B cell (primary cell): ENCODE measurements at regions of chr5 and their contacts with region 1.

Region 1: DNA sequence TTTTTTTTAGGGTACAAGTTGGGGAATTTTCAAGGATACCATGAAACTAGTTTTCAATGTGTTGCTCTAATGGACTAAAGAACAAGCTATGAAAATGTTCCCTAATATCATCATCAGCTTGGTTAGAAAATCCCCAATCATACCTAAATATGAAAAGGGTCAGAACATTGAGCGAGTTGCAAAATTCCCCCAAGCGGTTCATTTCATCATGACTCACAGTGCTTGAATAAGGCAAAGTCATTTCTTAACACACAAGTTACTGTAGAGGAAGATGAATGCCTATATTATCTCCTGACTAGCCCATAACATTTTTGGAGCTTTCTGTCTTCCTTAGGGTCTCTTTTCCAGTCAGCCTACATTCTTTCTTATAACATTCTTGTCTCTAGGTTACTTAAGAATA is 62.7 kb downstream of the ST8SIA4 start:
- DNase-seq: peak; percentile 54
- ATAC-seq: peak; percentile 61
- H3K4me3 ChIP-seq: no peak overlapping the region
- H3K4me3 Mint-ChIP-seq: peak overlapping the region; percentile 74
- H3K27ac ChIP-seq: peak overlapping the region in 1 of 2 donors; percentile 62
- H3K27ac Mint-ChIP-seq: no peak overlapping the region
- H3K4me1 ChIP-seq: peaks cover 14 to 23% of the 10 kb centered on the region in 2 donors
- H3K4me1 Mint-ChIP-seq: peaks cover 70% of the 10 kb centered on the region
- H3K27me3 ChIP-seq: no peaks in the 10 kb centered on the region
- H3K27me3 Mint-ChIP-seq: no peaks in the 10 kb centered on the region
- CTCF ChIP-seq: no peak

Region 2: GRCh38 chr5:100827481-100827889 is 12.9 kb before region 1 on chr5:
- CTCF ChIA-PET with region 1: interaction called, 5 read pairs
- POLR2A ChIA-PET with region 1: no interaction called
- intact Hi-C with region 1: loop called (anchors 2 kb)
- DNase-seq: no peak
- ATAC-seq: peak; percentile 10
- H3K4me3 ChIP-seq: no peak overlapping the region
- H3K4me3 Mint-ChIP-seq: peak overlapping the region; percentile 72
- H3K27ac ChIP-seq: peak overlapping the region; percentile 29 to 65
- H3K27ac Mint-ChIP-seq: peak overlapping the region; percentile 85
- H3K4me1 ChIP-seq: peaks cover 18 to 23% of the 10 kb centered on the region in 2 donors
- H3K4me1 Mint-ChIP-seq: peaks cover 42% of the 10 kb centered on the region
- H3K27me3 ChIP-seq: no peaks in the 10 kb centered on the region
- H3K27me3 Mint-ChIP-seq: no peaks in the 10 kb centered on the region
- CTCF ChIP-seq: no peak

Region 3: GRCh38 chr5:100852988-100853449 is 12.6 kb after region 1 on chr5:
- CTCF ChIA-PET with region 1: interaction called, 3 read pairs
- POLR2A ChIA-PET with region 1: interaction called, 3 read pairs
- intact Hi-C with region 1: loop called (anchors 1 kb)
- DNase-seq: peak; percentile 82
- ATAC-seq: peak; percentile 95
- H3K4me3 ChIP-seq: peak overlapping the region in 3 of 5 experiments; percentile 3 to 49 (median 16)
- H3K4me3 Mint-ChIP-seq: peak overlapping the region; percentile 68
- H3K27ac ChIP-seq: peak overlapping the region; percentile 51 to 84
- H3K27ac Mint-ChIP-seq: peak overlapping the region; percentile 76
- H3K4me1 ChIP-seq: peaks cover 37 to 51% of the 10 kb centered on the region in 2 donors
- H3K4me1 Mint-ChIP-seq: peaks cover 41% of the 10 kb centered on the region
- H3K27me3 ChIP-seq: no peaks in the 10 kb centered on the region
- H3K27me3 Mint-ChIP-seq: no peaks in the 10 kb centered on the region
- CTCF ChIP-seq: no peak